Posterior vena cava (tissue), 2 donors: ENCODE measurements at regions of chr2 and their contacts with region 1.

Region 1: GRCh38 chr2:3656762-3657721 is 958 bp upstream of the ALLC start:
- DNase-seq: no peak

Region 2: GRCh38 chr2:3282056-3282998 is 374.7 kb before region 1 on chr2:
- intact Hi-C with region 1: no loop called
- DNase-seq: peak; percentile 63

Region 3: DNA sequence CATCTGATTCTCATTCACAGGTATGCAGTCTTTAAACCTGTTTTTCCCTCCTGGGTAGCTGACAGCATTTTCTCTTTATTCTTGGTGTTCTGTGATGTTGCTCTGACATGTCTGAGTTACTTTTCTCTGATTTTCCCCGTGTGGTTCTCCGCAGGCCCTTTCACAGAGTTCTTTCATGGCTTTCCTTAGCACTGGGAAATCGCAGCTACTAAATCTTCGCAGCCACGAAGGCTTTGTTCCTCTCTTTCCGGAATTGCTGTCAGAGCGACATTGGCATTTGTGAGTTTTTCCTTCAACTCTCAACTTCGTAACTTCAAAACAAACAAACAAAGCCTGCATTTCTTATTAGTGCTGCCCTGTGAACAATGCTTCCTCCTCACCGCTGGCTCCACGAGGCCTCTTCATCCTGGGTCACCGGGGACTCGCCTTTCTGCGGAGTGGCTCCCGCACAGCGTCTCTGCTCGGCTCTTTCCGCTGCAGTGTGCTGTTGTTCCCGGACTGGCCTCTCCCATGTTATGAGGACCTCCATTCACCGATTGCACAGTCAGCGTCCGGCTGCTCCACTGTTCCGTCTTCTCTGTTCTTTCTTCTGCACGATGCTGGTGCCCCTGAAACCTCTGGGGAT is 46.0 kb before region 1 on chr2:
- intact Hi-C with region 1: no loop called
- DNase-seq: peak; percentile 58

Region 4: GRCh38 chr2:3645745-3646389 is 11.2 kb before region 1 on chr2:
- intact Hi-C with region 1: loop called in 1 of 2 experiments (anchors 1 kb)
- DNase-seq: peak; percentile 53